Psoas muscle (tissue), 8 donors: ENCODE measurements at regions of chr4 and their contacts with region 1.

Region 1: GRCh38 chr4:114642173-114642780 is 43.7 kb downstream of the UGT8 start:
- DNase-seq: no peak
- ATAC-seq: no peak
- H3K4me3 ChIP-seq: no peak overlapping the region
- H3K27ac ChIP-seq: no peak overlapping the region
- H3K4me1 ChIP-seq: no peaks in the 10 kb centered on the region
- H3K27me3 ChIP-seq: no peaks in the 10 kb centered on the region
- CTCF ChIP-seq: no peak

Region 2: GRCh38 chr4:113971706-113972360 is 670.4 kb before region 1 on chr4:
- intact Hi-C with region 1: no loop called
- DNase-seq: no peak
- ATAC-seq: no peak
- H3K4me3 ChIP-seq: no peak overlapping the region
- H3K27ac ChIP-seq: no peak overlapping the region
- H3K4me1 ChIP-seq: no peaks in the 10 kb centered on the region
- H3K27me3 ChIP-seq: no peaks in the 10 kb centered on the region
- CTCF ChIP-seq: no peak

Region 3: DNA sequence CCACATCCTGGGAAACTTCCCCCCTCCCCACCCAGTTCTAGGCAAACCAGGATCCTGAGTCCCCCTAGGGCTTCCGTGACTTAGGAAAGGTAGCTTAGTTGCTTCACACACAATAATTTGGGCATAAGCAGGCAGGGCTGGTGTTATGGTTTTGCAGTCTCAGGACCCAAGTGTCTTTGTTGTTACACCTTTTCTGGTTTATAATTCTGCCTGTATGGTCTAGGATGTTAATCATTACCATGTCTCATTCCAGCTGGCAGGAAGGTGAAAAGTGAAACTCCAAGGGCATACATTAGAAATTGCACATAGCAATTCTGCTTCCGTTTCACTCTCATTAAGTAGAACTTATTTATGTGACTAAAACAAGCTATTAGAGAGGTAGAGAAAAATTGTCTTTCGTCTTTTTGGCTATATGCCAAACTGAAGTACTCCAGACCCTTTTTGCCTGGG is 26.8 kb before region 1 on chr4:
- intact Hi-C with region 1: no loop called
- DNase-seq: no peak
- ATAC-seq: no peak
- H3K4me3 ChIP-seq: no peak overlapping the region
- H3K27ac ChIP-seq: no peak overlapping the region
- H3K4me1 ChIP-seq: no peaks in the 10 kb centered on the region
- H3K27me3 ChIP-seq: no peaks in the 10 kb centered on the region
- CTCF ChIP-seq: no peak

Region 4: DNA sequence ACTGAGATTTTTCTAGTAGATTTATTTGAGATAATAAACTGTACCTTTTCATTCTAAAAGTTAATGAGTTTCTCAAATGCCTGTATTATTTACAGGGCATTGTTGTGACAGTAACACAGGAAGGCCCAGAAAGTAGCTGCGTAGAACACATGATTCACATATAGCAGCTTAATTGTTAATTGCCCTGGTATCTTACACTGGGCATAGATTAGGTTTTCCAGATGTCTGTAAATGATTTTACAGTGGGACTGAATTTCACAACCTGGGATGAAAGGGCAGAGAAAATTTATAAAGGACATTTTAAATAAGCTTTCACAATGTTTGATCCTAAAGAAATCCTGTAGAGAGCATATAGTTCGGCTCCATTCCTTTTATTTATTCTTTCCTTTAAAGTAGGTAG is 16.1 kb before region 1 on chr4:
- intact Hi-C with region 1: loop called in 1 of 2 experiments (anchors 2 kb)
- DNase-seq: no peak
- ATAC-seq: no peak
- H3K4me3 ChIP-seq: no peak overlapping the region
- H3K27ac ChIP-seq: no peak overlapping the region
- H3K4me1 ChIP-seq: no peaks in the 10 kb centered on the region
- H3K27me3 ChIP-seq: peaks cover 0 to 2% (median 0%) of the 10 kb centered on the region in 3 donors
- CTCF ChIP-seq: no peak

Region 5: DNA sequence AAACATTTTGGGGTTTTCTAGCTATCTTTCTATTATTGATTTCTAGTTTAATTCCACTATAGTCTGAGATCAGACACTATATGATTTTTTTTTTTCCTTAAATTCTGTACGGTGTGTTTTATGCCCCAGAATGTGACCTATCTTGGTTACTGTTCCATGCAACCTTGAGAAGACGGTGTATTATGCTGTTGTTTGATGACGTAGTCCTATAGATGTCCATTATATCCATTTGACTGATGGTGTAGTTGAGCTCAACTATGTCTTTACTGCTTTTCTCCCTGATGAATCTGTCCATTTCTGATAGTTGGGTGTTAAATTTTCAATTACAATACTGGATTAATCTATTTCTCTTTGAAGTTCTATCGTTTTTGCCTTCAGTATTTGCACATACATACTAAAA is 258.7 kb after region 1 on chr4:
- intact Hi-C with region 1: no loop called
- DNase-seq: no peak
- ATAC-seq: no peak
- H3K4me3 ChIP-seq: no peak overlapping the region
- H3K27ac ChIP-seq: no peak overlapping the region
- H3K4me1 ChIP-seq: no peaks in the 10 kb centered on the region
- H3K27me3 ChIP-seq: no peaks in the 10 kb centered on the region
- CTCF ChIP-seq: no peak